Panc1 (cell line): ENCODE measurements at regions of chr5 and their contacts with region 1.

Region 1: DNA sequence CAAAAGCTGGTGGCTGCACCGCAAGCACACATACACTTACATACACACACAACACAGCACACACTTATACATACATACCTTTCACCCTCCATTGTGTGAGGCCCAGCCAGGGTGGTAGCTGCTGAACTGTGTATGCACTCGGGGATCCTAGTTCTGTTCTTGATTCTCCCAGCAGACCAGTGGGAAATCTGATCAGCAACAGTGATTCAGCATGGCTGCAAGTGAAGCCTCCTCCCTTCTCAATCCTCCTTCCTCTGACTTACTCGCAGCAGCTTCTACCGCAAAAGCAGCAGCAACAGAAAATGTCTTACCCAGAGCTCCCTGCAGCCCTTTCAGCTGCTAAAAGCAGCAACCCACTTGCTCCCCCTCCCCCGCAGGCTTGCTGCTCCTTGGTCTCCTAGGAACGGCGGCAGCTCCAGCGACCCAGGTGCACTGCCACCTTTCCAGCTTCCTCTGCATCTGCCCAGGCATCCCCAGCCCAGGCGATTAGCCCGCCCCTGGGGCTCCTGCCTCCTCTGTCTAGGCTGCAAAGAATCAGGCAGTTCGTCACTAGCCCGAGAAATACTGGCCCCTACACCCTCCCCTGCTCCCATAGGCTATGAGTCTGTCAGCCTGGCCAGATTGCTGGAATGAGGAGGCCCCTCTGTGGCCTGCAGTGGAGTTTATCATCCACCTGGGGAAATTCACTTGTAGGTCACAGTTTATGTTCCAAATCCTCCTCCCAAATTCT is at the start of gene KLHL3:
- DNase-seq: no peak
- ATAC-seq: peak; percentile 83
- H3K4me3 ChIP-seq: peak within 1 kb of the TSS; percentile 23 to 35
- H3K27ac ChIP-seq: 0 out of 2 replicates have a peak within 1 kb of the TSS, but pooled peaks have one; percentile 9
- H3K4me1 ChIP-seq: no peaks in the 10 kb centered on the region; the same call in 1 of the 2 replicates
- H3K27me3 ChIP-seq: 0 out of 2 replicates have a peak, but pooled peaks cover 2% of the 10 kb centered on the region
- CTCF ChIP-seq: peak; percentile 49
- total RNA-seq, gene KLHL3: 1.9 TPM

Region 2: DNA sequence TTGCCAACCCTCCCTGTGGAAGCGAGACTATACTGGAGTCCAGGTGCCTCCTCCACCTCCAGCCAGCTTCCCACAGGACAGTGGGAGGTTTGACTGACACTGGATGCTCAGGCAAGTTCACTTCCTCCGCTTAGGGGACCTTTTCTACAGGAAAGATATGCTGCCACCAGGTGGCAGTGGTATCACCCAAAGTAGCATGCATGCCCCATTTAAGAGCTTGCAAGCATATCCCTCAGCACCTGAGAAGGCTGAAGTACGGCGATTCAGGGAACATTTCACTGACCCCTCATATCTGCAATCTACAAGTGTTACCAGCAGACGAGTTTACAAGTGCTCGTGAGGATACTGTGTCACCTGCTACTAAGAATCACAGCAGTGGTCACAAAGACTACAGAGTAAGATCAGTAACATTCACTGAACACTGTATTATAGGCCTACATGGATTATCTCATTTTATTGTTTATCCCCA is 75.3 kb before region 1 on chr5:
- CTCF ChIA-PET with region 1: interaction called, 29 read pairs
- POLR2A ChIA-PET with region 1: no interaction called
- in situ Hi-C with region 1: no loop called
- intact Hi-C with region 1: loop called (anchors 2 kb)
- DNase-seq: peak; percentile 66
- ATAC-seq: peak; percentile 99
- H3K4me3 ChIP-seq: no peak overlapping the region
- H3K27ac ChIP-seq: no peak overlapping the region
- H3K4me1 ChIP-seq: no peaks in the 10 kb centered on the region
- H3K27me3 ChIP-seq: no peaks in the 10 kb centered on the region
- CTCF ChIP-seq: peak; percentile 86